ENCODE measurements at regions of chr3 and their contacts with region 1.

Region 1: DNA sequence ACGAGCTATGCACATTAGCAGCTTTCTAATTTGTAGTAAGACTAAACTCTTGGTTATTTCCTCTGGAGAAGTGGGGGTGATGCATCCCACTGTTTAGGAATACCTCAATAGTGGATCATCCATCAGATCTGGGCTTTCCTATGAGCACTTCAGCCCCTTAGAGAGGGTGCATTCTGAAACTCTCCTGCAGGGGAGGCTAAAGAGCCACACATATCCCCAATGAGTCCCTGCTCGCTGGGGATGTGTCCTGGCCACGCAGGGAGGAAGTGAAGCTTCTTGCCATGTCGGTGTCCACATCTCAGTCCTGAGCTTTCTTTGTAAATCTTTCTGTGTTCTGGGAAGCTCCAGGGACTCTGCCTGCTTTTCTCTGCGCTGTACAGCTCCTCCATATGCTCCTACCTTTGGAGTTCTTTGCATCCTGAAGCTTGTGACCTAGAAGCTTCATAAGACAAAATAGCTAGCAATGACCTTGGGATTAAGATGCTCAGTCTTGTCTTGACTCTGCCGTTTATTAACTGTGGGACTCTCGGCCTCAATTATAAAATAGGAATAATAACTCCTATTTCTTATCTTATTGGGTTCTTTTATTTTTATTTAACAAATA is 28.3 kb upstream of the MASP1 start:
- DNase-seq: peak; percentile 84
- H3K4me3 Mint-ChIP-seq: peak overlapping the region; percentile 47
- H3K27ac Mint-ChIP-seq: no peak overlapping the region
- H3K4me1 Mint-ChIP-seq: peaks cover 8% of the 10 kb centered on the region
- H3K27me3 Mint-ChIP-seq: peaks cover 33% of the 10 kb centered on the region
- CTCF ChIP-seq: peak; percentile 97

Region 2: GRCh38 chr3:186959029-186959624 is 360.7 kb before region 1 on chr3:
- CTCF ChIA-PET with region 1: no interaction called
- intact Hi-C with region 1: no loop called
- DNase-seq: no peak
- H3K4me3 Mint-ChIP-seq: no peak overlapping the region
- H3K27ac Mint-ChIP-seq: no peak overlapping the region
- H3K4me1 Mint-ChIP-seq: no peaks in the 10 kb centered on the region
- H3K27me3 Mint-ChIP-seq: no peaks in the 10 kb centered on the region
- CTCF ChIP-seq: no peak

Region 3: DNA sequence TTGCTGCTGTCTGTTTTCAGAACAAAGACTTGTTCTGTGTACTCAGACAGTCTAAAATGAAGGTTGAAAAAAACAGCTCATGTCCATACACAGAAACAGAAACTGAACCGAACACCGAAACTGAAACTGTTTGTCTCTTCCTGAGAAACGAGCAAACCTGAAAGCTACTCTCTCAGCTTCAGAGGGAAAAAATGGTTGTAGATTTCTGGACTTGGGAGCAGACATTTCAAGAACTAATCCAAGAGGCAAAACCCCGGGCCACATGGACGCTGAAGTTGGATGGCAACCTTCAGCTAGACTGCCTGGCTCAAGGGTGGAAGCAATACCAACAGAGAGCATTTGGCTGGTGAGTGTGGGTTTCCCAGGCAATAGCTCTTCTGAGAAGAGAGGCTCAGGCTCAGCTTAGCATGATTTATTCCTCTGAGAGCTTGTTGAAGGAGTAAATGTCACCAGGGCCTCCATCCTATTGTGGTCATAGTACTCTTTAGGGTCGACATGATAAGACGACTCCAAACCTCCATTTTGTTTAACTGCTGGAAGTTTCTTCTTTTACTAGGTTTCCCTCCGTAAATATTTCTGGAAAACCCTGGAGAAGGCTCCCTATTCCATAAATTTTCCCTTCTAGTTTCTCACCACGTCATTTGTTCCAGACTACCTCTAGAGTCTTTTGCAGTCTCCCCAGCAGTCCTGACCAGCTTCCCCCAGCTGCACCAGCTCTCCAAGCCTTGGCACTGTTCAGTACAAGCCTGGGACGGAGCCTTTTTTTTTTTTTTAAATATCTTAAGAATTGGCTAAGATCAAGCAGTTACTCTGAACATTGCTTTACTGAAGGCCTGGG is 48.7 kb after region 1 on chr3 and contains the start of gene RTP4:
- CTCF ChIA-PET with region 1: interaction called, 13 read pairs
- intact Hi-C with region 1: no loop called
- DNase-seq: peak; percentile 41
- H3K4me3 Mint-ChIP-seq: peak within 1 kb of the TSS; percentile 74
- H3K27ac Mint-ChIP-seq: peak within 1 kb of the TSS; percentile 98
- H3K4me1 Mint-ChIP-seq: peaks cover 17% of the 10 kb centered on the region
- H3K27me3 Mint-ChIP-seq: no peaks in the 10 kb centered on the region
- CTCF ChIP-seq: no peak
- total RNA-seq, gene RTP4: 12.3 and 21.8 TPM in 2 replicates

Region 4: GRCh38 chr3:187507268-187507667 is 187.5 kb after region 1 on chr3:
- CTCF ChIA-PET with region 1: no interaction called
- intact Hi-C with region 1: loop called (anchors 5 kb)
- DNase-seq: no peak
- H3K4me3 Mint-ChIP-seq: peak overlapping the region; percentile 37
- H3K27ac Mint-ChIP-seq: peak overlapping the region; percentile 60
- H3K4me1 Mint-ChIP-seq: peaks cover 30% of the 10 kb centered on the region
- H3K27me3 Mint-ChIP-seq: no peaks in the 10 kb centered on the region
- CTCF ChIP-seq: no peak

Region 5: GRCh38 chr3:187590861-187591576 is 271.2 kb after region 1 on chr3:
- CTCF ChIA-PET with region 1: interaction called, 10 read pairs
- intact Hi-C with region 1: no loop called
- DNase-seq: no peak
- H3K4me3 Mint-ChIP-seq: no peak overlapping the region
- H3K27ac Mint-ChIP-seq: no peak overlapping the region
- H3K4me1 Mint-ChIP-seq: no peaks in the 10 kb centered on the region
- H3K27me3 Mint-ChIP-seq: peaks cover 24% of the 10 kb centered on the region
- CTCF ChIP-seq: no peak

Region 6: GRCh38 chr3:187616307-187616972 is 296.6 kb after region 1 on chr3:
- CTCF ChIA-PET with region 1: interaction called, 29 read pairs
- intact Hi-C with region 1: loop called (anchors 1 kb)
- DNase-seq: peak; percentile 79
- H3K4me3 Mint-ChIP-seq: no peak overlapping the region
- H3K27ac Mint-ChIP-seq: no peak overlapping the region
- H3K4me1 Mint-ChIP-seq: no peaks in the 10 kb centered on the region
- H3K27me3 Mint-ChIP-seq: no peaks in the 10 kb centered on the region
- CTCF ChIP-seq: peak; percentile 92

Region 7: DNA sequence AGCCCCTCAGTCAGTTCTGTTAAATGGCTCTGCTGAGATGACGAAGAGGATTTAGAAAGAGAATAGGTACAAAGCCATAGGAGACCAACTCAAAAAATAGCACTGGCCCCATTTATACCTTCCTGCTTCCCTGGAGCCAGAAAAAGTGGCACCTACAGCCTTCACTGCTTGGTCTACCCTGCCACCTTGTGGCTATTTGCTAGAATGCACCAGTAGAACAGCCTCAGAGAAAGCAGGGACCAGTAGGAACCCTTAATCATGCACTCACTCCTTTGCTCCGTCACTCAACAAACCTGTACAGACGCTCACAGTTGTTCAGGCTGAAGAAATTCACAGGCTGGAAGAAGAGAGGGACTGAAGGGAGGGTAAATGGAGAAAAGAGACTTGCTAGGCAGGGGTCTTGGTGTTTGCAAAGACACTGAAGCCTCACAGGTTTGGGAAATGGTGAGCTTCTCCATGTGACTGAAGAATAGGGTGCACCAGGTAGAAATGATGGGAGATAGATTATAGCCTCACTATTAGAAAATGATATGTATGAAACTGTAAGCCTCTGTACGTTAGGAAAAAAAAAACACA is 394.7 kb after region 1 on chr3:
- CTCF ChIA-PET with region 1: interaction called, 16 read pairs
- intact Hi-C with region 1: loop called (anchors 1 kb)
- DNase-seq: peak; percentile 90
- H3K4me3 Mint-ChIP-seq: no peak overlapping the region
- H3K27ac Mint-ChIP-seq: no peak overlapping the region
- H3K4me1 Mint-ChIP-seq: peaks cover 10% of the 10 kb centered on the region
- H3K27me3 Mint-ChIP-seq: peaks cover 24% of the 10 kb centered on the region
- CTCF ChIP-seq: peak; percentile 97

Measured in Calu3 (cell line).